Left ventricle myocardium superior (tissue), 1 donor: ENCODE measurements at regions of chr2 and their contacts with region 1.

Region 1: GRCh38 chr2:112032689-112033465 is 22.2 kb upstream of the TMEM87B start:
- DNase-seq: no peak
- ATAC-seq: peak; percentile 78

Region 2: DNA sequence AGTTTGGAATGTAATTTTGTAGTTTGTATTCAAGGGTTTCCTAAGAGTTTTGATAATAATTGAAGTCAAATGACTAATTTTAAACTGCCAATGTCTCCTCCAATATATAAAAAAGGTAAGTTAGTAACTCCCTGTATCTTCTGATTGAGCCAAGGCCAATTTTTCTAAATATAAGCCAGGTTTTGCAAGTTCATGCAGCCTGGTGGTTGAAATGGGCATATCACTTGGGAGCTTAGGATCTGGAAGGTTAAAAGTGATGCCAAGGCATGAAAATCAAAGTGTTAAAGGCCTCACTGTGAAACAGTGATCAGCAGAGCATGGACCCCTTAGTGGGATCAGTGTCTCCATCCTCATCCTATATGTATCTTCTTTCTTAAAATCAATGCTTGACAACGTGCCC is 74.0 kb before region 1 on chr2:
- intact Hi-C with region 1: no loop called
- DNase-seq: no peak
- ATAC-seq: no peak

Region 3: GRCh38 chr2:111975053-111975552 is 57.8 kb before region 1 on chr2:
- intact Hi-C with region 1: loop called (anchors 10 kb)
- DNase-seq: no peak
- ATAC-seq: no peak